Left ventricle myocardium inferior (tissue), 1 donor: ENCODE measurements at regions of chr12 and their contacts with region 1.

Region 1: DNA sequence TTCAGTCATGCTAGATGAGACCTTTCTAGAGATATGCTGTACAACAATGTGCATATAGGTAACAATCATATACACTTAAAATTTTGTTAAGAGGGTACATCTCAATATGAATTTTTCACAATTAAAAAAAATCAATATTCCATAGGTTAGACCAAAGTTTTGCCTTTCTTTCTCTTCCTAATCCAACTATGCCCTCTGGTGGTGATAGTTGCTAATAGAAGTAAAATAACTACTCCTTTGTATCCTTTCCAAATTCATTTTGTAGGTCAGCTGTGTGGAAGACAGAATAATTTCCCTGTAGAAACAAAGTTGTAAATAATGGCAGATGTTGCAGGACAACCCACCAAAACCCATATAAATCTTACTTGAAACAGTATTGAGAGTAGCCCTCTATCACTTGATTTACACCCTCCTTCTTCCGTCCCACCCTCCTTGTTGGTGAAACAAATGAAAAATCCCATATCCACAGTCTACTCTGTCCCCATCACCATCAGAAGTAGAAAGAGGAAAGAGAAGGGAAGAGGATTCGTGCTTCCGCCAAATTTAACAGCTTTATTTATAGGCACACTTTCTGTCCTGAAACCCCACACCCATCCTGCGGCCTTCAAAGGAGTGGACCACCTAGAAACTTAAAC is 34.2 kb upstream of the KICS2 start:
- DNase-seq: no peak
- H3K4me3 ChIP-seq: peak overlapping the region; percentile 6
- H3K27ac ChIP-seq: no peak overlapping the region
- H3K4me1 ChIP-seq: no peaks in the 10 kb centered on the region
- H3K27me3 ChIP-seq: no peaks in the 10 kb centered on the region
- CTCF ChIP-seq: peak; percentile 77

Region 2: DNA sequence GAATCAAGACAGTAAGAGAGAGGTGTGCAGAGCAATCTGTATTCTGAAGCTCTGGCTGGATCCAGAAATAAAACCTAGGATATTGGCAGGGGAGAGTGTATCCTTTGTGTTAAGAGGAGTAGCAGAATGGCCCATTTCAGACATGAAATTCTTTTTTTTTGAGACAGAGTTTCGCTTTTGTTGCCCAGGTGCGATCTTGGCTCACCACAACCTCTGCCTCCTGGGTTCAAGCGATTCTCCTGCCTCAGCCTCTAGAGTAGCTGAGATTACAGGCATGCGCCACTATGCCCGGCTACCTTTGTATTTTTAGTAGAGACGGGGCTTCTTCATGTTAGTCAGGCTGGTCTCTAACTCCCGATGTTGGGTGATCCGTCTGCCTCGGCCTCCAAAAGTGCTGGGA is 417.9 kb before region 1 on chr12:
- intact Hi-C with region 1: loop called (anchors 2 kb)
- DNase-seq: no peak
- H3K4me3 ChIP-seq: no peak overlapping the region
- H3K27ac ChIP-seq: no peak overlapping the region
- H3K4me1 ChIP-seq: peaks cover 5% of the 10 kb centered on the region
- H3K27me3 ChIP-seq: no peaks in the 10 kb centered on the region
- CTCF ChIP-seq: no peak

Region 3: GRCh38 chr12:64039281-64039871 is 216.9 kb before region 1 on chr12:
- intact Hi-C with region 1: no loop called
- DNase-seq: no peak
- H3K4me3 ChIP-seq: peak overlapping the region; percentile 19
- H3K27ac ChIP-seq: peak overlapping the region; percentile 42
- H3K4me1 ChIP-seq: peaks cover 25% of the 10 kb centered on the region
- H3K27me3 ChIP-seq: no peaks in the 10 kb centered on the region
- CTCF ChIP-seq: no peak